K562 (cell line): ENCODE measurements at regions of chr3 and their contacts with region 1.

Region 1: GRCh38 chr3:38164966-38165680 is at the start of gene OXSR1:
- DNase-seq: peak; percentile 96 to 100 (median 97)
- ATAC-seq: peak; percentile 91
- H3K4me3 ChIP-seq: peak within 1 kb of the TSS; percentile 91
- H3K27ac ChIP-seq: peak within 1 kb of the TSS; percentile 98
- H3K4me1 ChIP-seq: peaks cover 22 to 35% of the 10 kb centered on the region in 2 experiments
- H3K27me3 ChIP-seq: no peaks in the 10 kb centered on the region
- CTCF ChIP-seq: peak in 1 of 3 experiments; percentile 12; a peak in 1 of 6 replicates
- EP300 ChIP-seq: peak; percentile 61; the same call in 1 of the 2 replicates
- POLR2A ChIP-seq: peak; percentile 86
- RAD21 ChIP-seq: no peak
- polyA plus RNA-seq, gene OXSR1: 15.7 to 19.8 TPM

Region 2: GRCh38 chr3:38154033-38154494 is 11.1 kb before region 1 on chr3:
- CTCF ChIA-PET with region 1: no interaction called
- POLR2A ChIA-PET with region 1: interaction called, 29 read pairs
- in situ Hi-C with region 1: no loop called
- intact Hi-C with region 1: no loop called
- DNase-seq: no peak
- ATAC-seq: no peak
- H3K4me3 ChIP-seq: no peak overlapping the region
- H3K27ac ChIP-seq: no peak overlapping the region
- H3K4me1 ChIP-seq: peaks cover 9 to 32% of the 10 kb centered on the region in 2 experiments
- H3K27me3 ChIP-seq: no peaks in the 10 kb centered on the region
- CTCF ChIP-seq: no peak
- EP300 ChIP-seq: no peak
- POLR2A ChIP-seq: no peak
- RAD21 ChIP-seq: no peak

Region 3: DNA sequence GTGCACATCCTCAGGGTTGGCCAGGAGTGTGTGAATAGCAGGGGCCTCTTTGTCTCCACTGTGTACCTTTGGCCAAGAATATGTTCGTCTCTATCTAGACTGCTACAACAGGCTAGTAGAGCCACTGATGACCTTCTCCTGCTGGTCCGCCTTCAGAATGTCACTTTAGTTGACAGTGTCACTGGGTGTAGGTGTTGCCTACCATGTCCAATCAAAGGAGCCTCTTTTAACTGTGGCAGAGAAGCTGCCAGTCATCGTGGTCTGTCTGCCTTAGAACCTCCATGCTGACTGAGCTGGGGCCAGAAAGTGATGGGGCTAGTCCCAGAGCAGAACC is 40.3 kb after region 1 on chr3:
- CTCF ChIA-PET with region 1: no interaction called
- POLR2A ChIA-PET with region 1: interaction called, 13 read pairs
- in situ Hi-C with region 1: no loop called
- intact Hi-C with region 1: no loop called
- DNase-seq: peak in 2 of 4 experiments; percentile 29 to 36
- ATAC-seq: peak; percentile 77
- H3K4me3 ChIP-seq: no peak overlapping the region
- H3K27ac ChIP-seq: no peak overlapping the region
- H3K4me1 ChIP-seq: no peaks in the 10 kb centered on the region
- H3K27me3 ChIP-seq: no peaks in the 10 kb centered on the region
- CTCF ChIP-seq: no peak
- EP300 ChIP-seq: no peak
- POLR2A ChIP-seq: no peak
- RAD21 ChIP-seq: no peak